ENCODE measurements at regions of chr2 and their contacts with region 1.

Region 1: DNA sequence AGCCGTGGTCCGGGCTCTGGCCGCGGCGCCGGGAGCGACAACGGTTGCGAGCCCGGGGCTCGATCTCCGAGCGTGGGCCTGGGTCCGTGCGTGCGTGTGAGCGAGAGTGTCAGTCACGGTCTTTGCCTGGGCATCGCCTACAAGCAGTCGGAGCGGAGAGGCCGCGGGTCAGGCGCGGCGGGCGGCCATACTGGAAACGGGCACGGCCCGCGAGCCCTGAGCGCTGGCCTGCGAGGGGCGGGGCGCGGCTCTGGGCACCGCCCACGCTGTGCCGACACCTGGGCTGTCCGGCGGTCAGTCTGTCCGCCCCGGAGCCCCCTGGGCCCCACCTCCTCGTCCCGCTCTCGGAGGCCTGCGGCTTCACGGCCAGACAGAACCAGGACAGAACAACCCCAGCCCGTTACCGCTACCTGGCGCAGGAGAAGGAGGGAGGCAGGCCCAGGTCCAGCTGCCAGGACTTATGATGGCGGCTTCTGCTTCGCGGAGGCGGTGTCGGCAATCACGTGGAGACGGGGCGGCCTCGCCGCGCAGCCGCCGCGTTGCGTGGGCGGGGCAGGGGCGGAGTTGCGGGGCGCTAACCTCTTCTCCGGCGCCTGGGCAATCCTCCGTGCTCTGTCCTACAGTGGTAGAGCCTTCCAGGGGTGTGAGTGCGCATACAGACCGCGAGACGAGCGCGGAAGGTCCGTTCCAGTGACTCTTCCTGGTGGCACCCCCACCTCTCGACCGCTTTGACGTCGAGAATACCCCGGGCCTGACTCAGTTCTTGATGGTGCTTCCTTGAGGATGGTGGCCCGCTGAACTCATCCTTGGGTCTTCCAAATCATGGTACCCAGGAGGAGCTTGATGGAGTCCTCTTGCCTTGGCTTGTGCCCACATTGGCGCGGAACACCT is at the start of gene TMEM131:
- DNase-seq: peak; percentile 92 to 97 (median 96)
- ATAC-seq: peak; percentile 82
- H3K4me3 ChIP-seq: peak within 1 kb of the TSS; percentile 68 to 95
- H3K4me3 Mint-ChIP-seq: peak within 1 kb of the TSS; percentile 90
- H3K27ac ChIP-seq: peak within 1 kb of the TSS; percentile 82 to 87
- H3K27ac Mint-ChIP-seq: peak within 1 kb of the TSS; percentile 97
- H3K4me1 ChIP-seq: peaks cover 36% of the 10 kb centered on the region
- H3K4me1 Mint-ChIP-seq: peaks cover 43% of the 10 kb centered on the region
- H3K27me3 ChIP-seq: no peaks in the 10 kb centered on the region
- H3K27me3 Mint-ChIP-seq: no peaks in the 10 kb centered on the region
- CTCF ChIP-seq: no peak
- total RNA-seq, gene TMEM131: 26.8 to 31.5 TPM

Region 2: DNA sequence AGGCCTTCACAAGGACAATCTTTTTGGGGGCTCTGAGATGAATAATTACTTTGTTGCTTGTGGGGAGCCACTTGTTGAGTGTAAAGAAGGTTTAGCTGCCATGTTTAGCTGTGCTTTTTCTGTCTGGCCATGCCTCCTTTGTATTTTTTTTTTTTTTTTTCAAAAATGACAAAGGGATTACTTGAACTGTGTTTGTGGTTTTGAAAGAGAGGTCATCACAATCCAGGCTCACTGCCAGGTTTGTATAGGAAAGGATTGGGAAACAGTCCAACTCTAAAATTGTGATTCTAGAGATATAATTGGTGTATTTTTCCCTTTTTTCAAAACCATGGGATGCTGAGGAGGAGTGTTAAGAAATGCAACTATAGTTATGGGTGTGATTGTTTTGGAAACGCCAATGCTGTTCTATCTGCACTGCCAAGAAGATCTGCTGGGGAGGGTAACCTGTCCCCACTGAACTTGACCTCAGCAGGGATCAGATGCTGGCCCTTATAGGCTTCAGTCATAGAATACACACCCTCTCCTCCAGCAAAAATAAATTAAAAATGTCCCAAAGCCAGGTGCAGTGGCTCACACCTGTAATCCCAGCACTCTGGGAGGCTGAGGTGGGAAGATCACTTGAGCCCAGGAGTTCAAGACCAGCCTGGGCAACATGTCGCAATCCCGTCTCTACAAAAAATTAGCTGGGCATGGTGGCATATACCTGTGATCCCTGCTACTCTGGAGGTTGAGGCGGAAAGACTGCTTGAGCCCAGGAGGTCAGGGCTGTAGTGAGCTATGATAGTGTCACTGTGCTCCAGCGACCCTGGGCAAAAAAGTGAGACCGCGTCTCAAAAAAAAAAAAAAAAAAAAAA is 1666.3 kb before region 1 on chr2:
- CTCF ChIA-PET with region 1: no interaction called
- POLR2A ChIA-PET with region 1: no interaction called
- intact Hi-C with region 1: loop called in 1 of 2 experiments (anchors 10 kb)
- DNase-seq: no peak
- ATAC-seq: no peak
- H3K4me3 ChIP-seq: no peak overlapping the region
- H3K4me3 Mint-ChIP-seq: no peak overlapping the region
- H3K27ac ChIP-seq: no peak overlapping the region
- H3K27ac Mint-ChIP-seq: no peak overlapping the region
- H3K4me1 ChIP-seq: peaks cover 25% of the 10 kb centered on the region
- H3K4me1 Mint-ChIP-seq: peaks cover 36% of the 10 kb centered on the region
- H3K27me3 ChIP-seq: no peaks in the 10 kb centered on the region
- H3K27me3 Mint-ChIP-seq: no peaks in the 10 kb centered on the region
- CTCF ChIP-seq: no peak

Region 3: DNA sequence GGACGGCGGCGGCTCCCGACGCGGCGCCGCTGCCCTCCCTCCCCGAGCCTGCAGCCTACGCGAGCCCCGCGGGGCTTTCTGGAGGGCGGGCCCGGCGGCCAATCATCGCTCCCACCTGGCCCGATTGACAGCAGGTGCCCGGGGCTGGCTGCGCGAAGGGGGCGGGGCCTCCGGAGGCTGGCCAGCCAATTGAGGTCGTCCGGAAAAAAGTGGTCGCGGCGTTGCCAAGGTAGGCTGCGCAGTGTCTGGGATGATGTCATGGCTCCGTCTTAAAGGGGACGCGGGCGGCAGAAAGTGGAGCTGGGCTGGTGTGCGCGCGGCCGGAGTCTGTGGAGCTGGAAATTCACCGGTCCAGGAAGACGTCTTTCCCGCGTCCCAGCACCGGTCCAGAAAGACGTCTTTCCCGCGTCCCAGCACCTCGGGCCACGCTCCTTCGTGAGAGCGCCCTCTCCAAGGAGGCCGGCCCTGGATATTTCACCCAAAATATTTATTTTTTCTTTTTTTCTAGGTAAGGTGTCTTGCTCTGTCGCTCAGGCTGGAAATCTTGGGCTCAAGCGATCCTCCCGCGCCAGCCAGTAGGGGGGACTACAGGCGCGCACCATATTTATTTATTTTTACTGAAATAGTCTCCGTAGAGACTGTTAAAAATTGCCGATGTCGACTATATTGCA is 331.9 kb before region 1 on chr2 and contains the start of gene ACTR1B:
- CTCF ChIA-PET with region 1: no interaction called
- POLR2A ChIA-PET with region 1: no interaction called
- intact Hi-C with region 1: loop called in 1 of 2 experiments (anchors 1 kb)
- DNase-seq: peak; percentile 94 to 100 (median 97)
- ATAC-seq: peak; percentile 86
- H3K4me3 ChIP-seq: peak within 1 kb of the TSS; percentile 86 to 93
- H3K4me3 Mint-ChIP-seq: peak within 1 kb of the TSS; percentile 93
- H3K27ac ChIP-seq: peak within 1 kb of the TSS; percentile 94 to 97
- H3K27ac Mint-ChIP-seq: peak within 1 kb of the TSS; percentile 97
- H3K4me1 ChIP-seq: peaks cover 30% of the 10 kb centered on the region
- H3K4me1 Mint-ChIP-seq: peaks cover 28% of the 10 kb centered on the region
- H3K27me3 ChIP-seq: no peaks in the 10 kb centered on the region
- H3K27me3 Mint-ChIP-seq: no peaks in the 10 kb centered on the region
- CTCF ChIP-seq: no peak
- total RNA-seq, gene ACTR1B: 81.9 to 82.1 TPM

Region 4: DNA sequence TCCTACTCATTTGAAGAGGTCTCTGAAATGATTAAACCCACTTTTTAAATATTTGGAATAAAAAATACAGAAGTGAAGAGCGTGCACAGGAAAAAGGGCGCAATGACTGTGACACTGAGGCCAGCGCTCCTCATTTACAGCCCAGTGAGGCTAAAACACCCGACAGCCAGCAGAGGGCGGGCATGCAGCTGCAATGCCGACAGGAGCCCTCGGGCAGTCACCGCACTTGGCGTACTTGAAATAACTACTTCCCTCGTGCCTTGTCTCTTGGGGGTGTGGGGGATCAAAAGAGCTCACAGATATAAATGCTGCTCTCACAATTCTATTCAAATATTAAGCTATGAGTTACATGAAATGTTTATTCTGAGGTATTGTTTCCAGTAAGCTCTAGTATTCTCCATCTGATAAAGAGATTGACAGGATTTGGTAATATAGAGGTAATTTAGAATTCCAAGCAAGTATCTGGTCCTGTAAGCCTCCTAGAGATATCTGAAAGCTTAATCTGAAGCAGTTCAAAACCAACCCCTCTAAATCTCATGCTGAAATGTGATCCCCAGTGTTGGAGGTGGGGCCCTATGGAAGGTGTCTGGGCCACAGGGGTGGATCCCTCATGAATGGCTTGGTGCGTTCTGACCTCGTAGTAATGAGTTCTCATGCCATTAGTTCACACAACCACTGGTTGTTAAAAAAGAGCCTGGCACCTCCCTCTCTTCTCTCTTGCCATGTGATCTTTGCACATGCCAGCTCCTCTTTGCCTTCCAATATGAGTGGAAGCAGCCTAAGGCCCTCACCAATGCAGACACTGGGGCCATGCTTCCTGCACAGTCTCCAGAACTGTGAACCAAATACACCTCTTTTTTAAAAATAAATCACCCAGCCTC is 189.0 kb before region 1 on chr2:
- CTCF ChIA-PET with region 1: interaction called, 4 read pairs
- POLR2A ChIA-PET with region 1: no interaction called
- intact Hi-C with region 1: loop called in 1 of 2 experiments (anchors 2 kb)
- DNase-seq: peak; percentile 56 to 84 (median 77)
- ATAC-seq: peak; percentile 95
- H3K4me3 ChIP-seq: no peak overlapping the region
- H3K4me3 Mint-ChIP-seq: no peak overlapping the region
- H3K27ac ChIP-seq: no peak overlapping the region
- H3K27ac Mint-ChIP-seq: no peak overlapping the region
- H3K4me1 ChIP-seq: no peaks in the 10 kb centered on the region
- H3K4me1 Mint-ChIP-seq: no peaks in the 10 kb centered on the region
- H3K27me3 ChIP-seq: no peaks in the 10 kb centered on the region
- H3K27me3 Mint-ChIP-seq: no peaks in the 10 kb centered on the region
- CTCF ChIP-seq: peak; percentile 95

Region 5: GRCh38 chr2:98608116-98608999 is 612.4 kb after region 1 on chr2 and contains the starts of genes COA5 and UNC50:
- CTCF ChIA-PET with region 1: no interaction called
- POLR2A ChIA-PET with region 1: no interaction called
- intact Hi-C with region 1: loop called in 1 of 2 experiments (anchors 10 kb)
- DNase-seq: peak; percentile 84 to 95 (median 89)
- ATAC-seq: peak; percentile 81
- H3K4me3 ChIP-seq: peak within 1 kb of the TSS; percentile 84 to 94
- H3K4me3 Mint-ChIP-seq: peak within 1 kb of the TSS; percentile 89
- H3K27ac ChIP-seq: peak within 1 kb of the TSS; percentile 87 to 95
- H3K27ac Mint-ChIP-seq: peak within 1 kb of the TSS; percentile 95
- H3K4me1 ChIP-seq: peaks cover 48% of the 10 kb centered on the region
- H3K4me1 Mint-ChIP-seq: peaks cover 74% of the 10 kb centered on the region
- H3K27me3 ChIP-seq: no peaks in the 10 kb centered on the region
- H3K27me3 Mint-ChIP-seq: no peaks in the 10 kb centered on the region
- CTCF ChIP-seq: no peak
- total RNA-seq, gene COA5: 19.7 to 24.1 TPM
- total RNA-seq, gene UNC50: 12.5 to 14.4 TPM

Region 6: DNA sequence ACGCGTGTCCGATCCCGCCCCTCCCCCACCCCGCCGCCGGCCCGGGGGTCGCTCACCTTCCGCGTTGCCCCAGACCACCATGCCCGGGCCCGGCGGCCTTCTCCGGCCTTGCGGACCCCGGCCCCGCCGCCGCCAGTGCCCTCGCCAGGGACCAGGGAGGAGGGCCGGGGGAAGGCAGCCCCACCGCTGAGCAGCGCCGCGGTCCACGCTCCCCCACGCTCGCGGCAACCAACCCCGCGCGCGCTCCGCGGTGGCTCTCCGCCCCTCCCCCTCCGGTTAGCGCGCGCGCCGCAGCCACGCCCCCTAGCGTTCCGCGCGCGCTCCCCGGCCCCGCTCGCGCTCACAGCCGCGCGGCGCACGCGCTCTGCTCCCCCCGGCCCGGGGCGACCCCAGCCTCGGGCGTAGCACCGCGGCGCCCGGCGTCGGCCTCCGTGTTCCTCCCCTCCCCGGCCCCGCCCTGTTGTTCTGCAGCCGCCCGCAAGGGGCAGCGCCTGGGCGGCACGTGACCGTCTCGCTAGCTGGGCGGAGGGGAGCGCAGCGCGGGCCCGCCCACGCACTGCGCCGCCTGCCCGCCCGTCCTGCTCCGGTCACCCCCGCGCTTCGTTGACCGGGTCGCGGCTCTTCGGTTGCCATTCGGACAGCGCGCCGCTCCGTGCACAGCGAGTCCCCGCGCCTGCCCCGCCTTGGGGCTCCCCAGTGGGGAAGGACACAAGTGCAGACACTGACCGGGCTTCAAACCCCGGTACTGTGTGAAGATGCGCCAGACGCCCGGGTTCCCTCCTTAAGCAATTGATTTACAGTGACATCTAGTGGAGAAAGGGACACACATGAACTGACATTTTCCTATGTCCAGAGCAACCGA is 1494.0 kb after region 1 on chr2 and contains the start of gene REV1:
- CTCF ChIA-PET with region 1: no interaction called
- POLR2A ChIA-PET with region 1: no interaction called
- intact Hi-C with region 1: loop called in 1 of 2 experiments (anchors 2 kb)
- DNase-seq: peak; percentile 85 to 97 (median 94)
- ATAC-seq: peak; percentile 88
- H3K4me3 ChIP-seq: peak within 1 kb of the TSS; percentile 87 to 89
- H3K4me3 Mint-ChIP-seq: peak within 1 kb of the TSS; percentile 97
- H3K27ac ChIP-seq: peak within 1 kb of the TSS; percentile 76 to 86
- H3K27ac Mint-ChIP-seq: peak within 1 kb of the TSS; percentile 98
- H3K4me1 ChIP-seq: peaks cover 24% of the 10 kb centered on the region
- H3K4me1 Mint-ChIP-seq: peaks cover 43% of the 10 kb centered on the region
- H3K27me3 ChIP-seq: no peaks in the 10 kb centered on the region
- H3K27me3 Mint-ChIP-seq: no peaks in the 10 kb centered on the region
- CTCF ChIP-seq: peak; percentile 78
- total RNA-seq, gene REV1: 39.3 to 42.3 TPM